ENCODE measurements at regions of chr2 and their contacts with region 1.

Region 1: GRCh38 chr2:223957092-223957851 is at the start of gene MRPL44:
- DNase-seq: peak; percentile 93 to 94
- ATAC-seq: peak; percentile 96 to 97
- H3K4me3 ChIP-seq: peak within 1 kb of the TSS; percentile 89 to 100 (median 96)
- H3K27ac ChIP-seq: peak within 1 kb of the TSS; percentile 82 to 94 (median 87)
- H3K4me1 ChIP-seq: peaks cover 40 to 50% of the 10 kb centered on the region in 2 donors
- H3K27me3 ChIP-seq: no peaks in the 10 kb centered on the region
- CTCF ChIP-seq: peak in 3 of 5 experiments; percentile 20 to 29 (median 20)
- POLR2A ChIP-seq: peak; percentile 75
- total RNA-seq, gene MRPL44: 25.8 to 40.6 (median 33.7) TPM

Region 2: GRCh38 chr2:222655787-222656525 is 1301.3 kb before region 1 on chr2 and contains the start of gene FARSB:
- in situ Hi-C with region 1: no loop called
- intact Hi-C with region 1: loop called (anchors 10 kb)
- DNase-seq: peak; percentile 89 to 94
- ATAC-seq: peak; percentile 97 to 98
- H3K4me3 ChIP-seq: peak within 1 kb of the TSS; percentile 81 to 97 (median 96)
- H3K27ac ChIP-seq: peak within 1 kb of the TSS; percentile 82 to 96 (median 86)
- H3K4me1 ChIP-seq: peaks cover 35 to 38% of the 10 kb centered on the region in 2 donors
- H3K27me3 ChIP-seq: no peaks in the 10 kb centered on the region
- CTCF ChIP-seq: no peak
- POLR2A ChIP-seq: peak; percentile 49 to 65
- total RNA-seq, gene FARSB: 23.9 to 33.5 (median 29.9) TPM

Region 3: DNA sequence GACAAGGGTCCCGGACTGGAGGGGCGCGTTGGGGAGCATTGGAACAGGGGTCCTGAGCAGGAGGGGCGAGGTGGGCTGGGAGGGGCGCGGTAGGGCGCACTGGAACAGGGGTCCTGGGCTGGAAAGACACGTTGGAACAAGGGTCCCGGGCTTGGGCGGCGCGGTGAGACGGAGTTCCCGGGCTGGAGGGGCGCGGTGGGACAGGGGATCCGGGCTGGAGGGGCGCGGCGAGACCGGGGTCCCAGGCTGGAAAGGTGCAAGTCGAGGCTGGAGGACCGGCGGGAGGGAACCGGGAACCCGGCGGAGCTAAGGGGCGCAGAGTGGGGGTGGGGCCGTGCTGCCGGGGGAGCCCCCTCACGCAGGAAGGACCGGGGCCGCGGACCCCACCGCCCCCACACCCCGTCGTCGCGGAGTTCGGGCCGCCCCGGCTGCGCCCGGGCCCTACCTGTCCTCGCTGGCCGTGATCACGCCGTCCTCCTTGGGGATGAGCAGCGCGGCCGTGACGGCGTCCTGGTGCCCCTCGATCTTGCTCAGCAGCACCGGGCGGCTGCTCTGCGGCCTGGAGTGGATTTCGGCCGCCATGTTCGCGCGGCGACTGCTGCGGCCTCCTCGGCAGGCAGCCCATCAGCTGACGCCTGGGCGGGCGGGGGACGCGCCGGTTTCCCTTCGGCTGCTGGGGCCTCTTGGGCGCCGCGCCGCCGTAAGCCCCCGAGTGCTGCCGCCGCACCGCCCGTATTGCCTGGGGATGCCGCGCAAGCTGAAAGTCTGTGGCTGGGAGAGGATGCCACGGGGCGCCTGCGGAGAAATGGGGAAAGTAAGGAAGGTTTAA is 12.4 kb before region 1 on chr2 and contains the start of gene WDFY1:
- in situ Hi-C with region 1: no loop called
- intact Hi-C with region 1: loop called (anchors 1 kb)
- DNase-seq: peak; percentile 75 to 83
- ATAC-seq: peak; percentile 74 to 91
- H3K4me3 ChIP-seq: peak within 1 kb of the TSS; percentile 77 to 92 (median 86)
- H3K27ac ChIP-seq: peak within 1 kb of the TSS; percentile 89 to 97 (median 92)
- H3K4me1 ChIP-seq: peaks cover 20 to 27% of the 10 kb centered on the region in 2 donors
- H3K27me3 ChIP-seq: no peaks in the 10 kb centered on the region
- CTCF ChIP-seq: peak in 2 of 5 experiments; percentile 12 to 13
- POLR2A ChIP-seq: peak; percentile 80 to 93
- total RNA-seq, gene WDFY1: 12.0 to 25.7 (median 17.1) TPM

Region 4: DNA sequence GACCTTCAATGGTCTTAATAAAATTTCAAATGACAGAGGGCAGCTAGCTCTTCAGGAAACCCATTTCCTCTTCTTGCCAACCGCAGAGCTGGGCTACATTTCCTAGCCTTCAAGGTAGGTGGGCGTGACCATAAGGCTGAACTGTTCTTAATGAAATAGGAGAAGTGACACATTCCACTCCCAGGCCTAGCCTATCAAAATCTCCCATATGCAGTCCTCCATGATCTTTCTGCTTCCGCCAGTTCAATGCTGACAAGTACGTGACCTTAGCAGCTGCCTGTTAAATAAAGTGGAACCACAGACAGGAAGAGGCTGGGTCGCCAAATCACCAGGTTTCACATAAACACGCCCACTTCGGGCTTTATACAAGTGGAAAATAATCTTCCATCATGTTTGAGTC is 68.6 kb after region 1 on chr2:
- in situ Hi-C with region 1: no loop called
- intact Hi-C with region 1: no loop called
- DNase-seq: no peak
- ATAC-seq: no peak
- H3K4me3 ChIP-seq: no peak overlapping the region
- H3K27ac ChIP-seq: no peak overlapping the region
- H3K4me1 ChIP-seq: no peaks in the 10 kb centered on the region
- H3K27me3 ChIP-seq: no peaks in the 10 kb centered on the region
- CTCF ChIP-seq: no peak
- POLR2A ChIP-seq: no peak

Region 5: DNA sequence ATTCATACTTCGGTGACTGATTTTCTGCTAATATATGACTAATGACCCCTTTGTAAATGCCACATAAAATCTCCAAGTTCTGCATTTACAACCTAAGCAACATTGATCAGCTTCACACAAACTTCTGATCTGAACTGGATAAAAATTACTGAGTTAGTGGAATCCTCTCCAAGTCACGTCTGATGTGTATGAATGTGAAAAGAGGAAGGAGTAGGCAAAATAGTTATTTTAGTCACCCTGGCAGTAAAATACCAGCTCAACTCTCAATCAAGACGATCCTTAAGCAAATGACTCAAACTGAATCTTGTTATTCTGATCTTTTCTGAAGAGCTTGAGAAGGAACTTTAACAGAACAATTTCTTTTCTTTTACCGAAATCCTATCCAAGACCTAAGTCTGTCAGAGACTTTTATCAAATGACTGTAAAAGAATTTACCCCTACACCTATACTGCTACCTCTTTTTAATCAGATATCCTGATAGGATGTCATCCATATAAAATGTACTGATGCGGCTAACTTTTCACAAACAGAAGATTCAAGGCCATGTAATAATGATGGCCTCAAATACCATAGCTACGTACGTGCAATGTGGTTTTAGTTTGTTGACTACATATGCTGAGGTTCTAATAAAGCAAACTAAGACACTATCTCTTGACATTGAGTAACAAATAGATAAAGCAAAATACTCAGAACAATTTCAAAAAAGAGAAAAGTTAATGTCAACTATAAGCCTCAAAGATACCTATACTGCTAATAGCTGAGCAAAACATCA is 604.1 kb after region 1 on chr2:
- in situ Hi-C with region 1: loop called in 1 of 4 experiments (anchors 25 kb)
- intact Hi-C with region 1: no loop called
- DNase-seq: no peak
- ATAC-seq: no peak
- H3K4me3 ChIP-seq: no peak overlapping the region
- H3K27ac ChIP-seq: no peak overlapping the region
- H3K4me1 ChIP-seq: peaks cover 28 to 50% of the 10 kb centered on the region in 2 donors
- H3K27me3 ChIP-seq: no peaks in the 10 kb centered on the region
- CTCF ChIP-seq: no peak
- POLR2A ChIP-seq: no peak

Region 6: GRCh38 chr2:224585205-224586088 is 628.2 kb after region 1 on chr2 and contains the start of gene CUL3:
- in situ Hi-C with region 1: loop called in 2 of 4 experiments (anchors 25 kb)
- intact Hi-C with region 1: no loop called
- DNase-seq: peak; percentile 98
- ATAC-seq: peak; percentile 90
- H3K4me3 ChIP-seq: peak within 1 kb of the TSS; percentile 61 to 89 (median 80)
- H3K27ac ChIP-seq: peak within 1 kb of the TSS; percentile 91 to 95 (median 93)
- H3K4me1 ChIP-seq: peaks cover 27 to 28% of the 10 kb centered on the region in 2 donors
- H3K27me3 ChIP-seq: no peaks in the 10 kb centered on the region
- CTCF ChIP-seq: no peak
- POLR2A ChIP-seq: peak; percentile 87
- total RNA-seq, gene CUL3: 94.1 to 120 (median 109) TPM

Measured in gastrocnemius medialis (tissue), 4 donors.